CD8-positive, alpha-beta T cell (primary cell): ENCODE measurements at regions of chr3 and their contacts with region 1.

Region 1: DNA sequence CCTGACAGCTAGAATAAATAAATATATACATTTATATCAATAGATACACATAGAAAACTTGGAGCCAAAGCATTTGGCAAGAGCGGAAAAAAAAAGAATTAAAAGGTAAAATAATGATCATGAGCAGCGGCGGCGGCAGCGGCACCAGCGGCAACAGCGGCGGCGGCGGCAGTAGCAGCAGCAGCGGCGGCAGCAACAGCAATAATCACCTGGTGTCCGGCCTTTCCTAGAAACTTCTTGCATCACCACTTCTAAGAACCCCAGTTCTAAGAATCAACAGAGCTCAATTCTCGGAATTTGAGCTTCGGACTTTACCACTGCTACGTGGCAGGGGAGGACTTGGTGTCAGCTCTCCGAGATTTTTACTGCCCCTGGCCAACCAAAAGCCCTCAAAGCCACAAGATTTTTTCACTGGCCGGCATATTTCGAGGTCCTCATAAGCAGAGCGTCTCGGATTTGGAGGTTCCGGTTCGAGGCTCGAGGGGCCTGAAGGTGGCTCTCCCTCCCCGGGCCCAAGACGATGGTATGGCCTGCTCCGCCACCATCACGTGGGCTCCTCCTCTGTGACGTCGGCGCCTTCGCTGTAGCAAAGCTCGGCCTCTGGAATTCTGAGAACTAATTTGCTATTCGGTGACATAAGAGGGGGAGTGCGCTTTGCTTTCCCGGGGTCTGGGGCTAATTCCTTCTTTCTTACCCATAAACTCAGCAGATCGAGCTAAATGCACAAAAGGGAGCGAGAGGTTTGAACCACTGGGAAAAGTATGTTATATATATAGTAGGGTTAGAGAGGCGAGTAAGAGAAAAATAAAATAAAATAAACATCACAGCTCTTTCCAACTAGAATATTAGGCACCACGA is at the start of gene BCL6:
- DNase-seq: peak; percentile 71 to 97 (median 84)
- ATAC-seq: peak; percentile 64
- H3K4me3 ChIP-seq: peak within 1 kb of the TSS; percentile 88 to 89
- H3K4me3 Mint-ChIP-seq: peak within 1 kb of the TSS; percentile 94
- H3K27ac ChIP-seq: peak within 1 kb of the TSS; percentile 98 to 99
- H3K27ac Mint-ChIP-seq: peak within 1 kb of the TSS; percentile 100
- H3K4me1 ChIP-seq: peaks cover 38% of the 10 kb centered on the region
- H3K4me1 Mint-ChIP-seq: peaks cover 77% of the 10 kb centered on the region
- H3K27me3 ChIP-seq: no peaks in the 10 kb centered on the region
- H3K27me3 Mint-ChIP-seq: no peaks in the 10 kb centered on the region
- CTCF ChIP-seq: no peak
- total RNA-seq, gene BCL6: 89.2 to 93.1 TPM

Region 2: GRCh38 chr3:187777331-187777941 is 32.0 kb after region 1 on chr3:
- CTCF ChIA-PET with region 1: interaction called, 7 read pairs
- POLR2A ChIA-PET with region 1: no interaction called
- intact Hi-C with region 1: loop called in 1 of 2 experiments (anchors 1 kb)
- DNase-seq: peak in 8 of 9 experiments; percentile 10 to 84 (median 43)
- ATAC-seq: peak; percentile 88
- H3K4me3 ChIP-seq: no peak overlapping the region
- H3K4me3 Mint-ChIP-seq: peak overlapping the region; percentile 33
- H3K27ac ChIP-seq: peak overlapping the region in 1 of 2 experiments; percentile 64
- H3K27ac Mint-ChIP-seq: peak overlapping the region; percentile 88
- H3K4me1 ChIP-seq: peaks cover 16% of the 10 kb centered on the region
- H3K4me1 Mint-ChIP-seq: peaks cover 23% of the 10 kb centered on the region
- H3K27me3 ChIP-seq: no peaks in the 10 kb centered on the region
- H3K27me3 Mint-ChIP-seq: no peaks in the 10 kb centered on the region
- CTCF ChIP-seq: no peak

Region 3: GRCh38 chr3:187919048-187919447 is 173.6 kb after region 1 on chr3:
- CTCF ChIA-PET with region 1: interaction called, 4 read pairs
- POLR2A ChIA-PET with region 1: interaction called, 3 read pairs
- intact Hi-C with region 1: loop called (anchors 1 to 2 kb)
- DNase-seq: peak; percentile 10 to 84 (median 61)
- ATAC-seq: peak; percentile 85
- H3K4me3 ChIP-seq: peak overlapping the region; percentile 23 to 45
- H3K4me3 Mint-ChIP-seq: peak overlapping the region; percentile 80
- H3K27ac ChIP-seq: peak overlapping the region; percentile 28 to 77
- H3K27ac Mint-ChIP-seq: peak overlapping the region; percentile 89
- H3K4me1 ChIP-seq: peaks cover 21% of the 10 kb centered on the region
- H3K4me1 Mint-ChIP-seq: peaks cover 49% of the 10 kb centered on the region
- H3K27me3 ChIP-seq: no peaks in the 10 kb centered on the region
- H3K27me3 Mint-ChIP-seq: no peaks in the 10 kb centered on the region
- CTCF ChIP-seq: no peak

Region 4: GRCh38 chr3:188061133-188061532 is 315.7 kb after region 1 on chr3:
- CTCF ChIA-PET with region 1: interaction called, 8 read pairs
- POLR2A ChIA-PET with region 1: interaction called, 4 read pairs
- intact Hi-C with region 1: loop called (anchors 1 to 5 kb)
- DNase-seq: peak in 6 of 9 experiments; percentile 29 to 73 (median 50)
- ATAC-seq: peak; percentile 84
- H3K4me3 ChIP-seq: no peak overlapping the region
- H3K4me3 Mint-ChIP-seq: no peak overlapping the region
- H3K27ac ChIP-seq: peak overlapping the region in 1 of 2 experiments; percentile 21
- H3K27ac Mint-ChIP-seq: peak overlapping the region; percentile 57
- H3K4me1 ChIP-seq: peaks cover 4% of the 10 kb centered on the region
- H3K4me1 Mint-ChIP-seq: peaks cover 17% of the 10 kb centered on the region
- H3K27me3 ChIP-seq: no peaks in the 10 kb centered on the region
- H3K27me3 Mint-ChIP-seq: no peaks in the 10 kb centered on the region
- CTCF ChIP-seq: no peak

Region 5: GRCh38 chr3:188554404-188554803 is 809.0 kb after region 1 on chr3:
- CTCF ChIA-PET with region 1: interaction called, 7 read pairs
- POLR2A ChIA-PET with region 1: no interaction called
- intact Hi-C with region 1: loop called (anchors 10 kb)
- DNase-seq: no peak
- ATAC-seq: no peak
- H3K4me3 ChIP-seq: no peak overlapping the region
- H3K4me3 Mint-ChIP-seq: no peak overlapping the region
- H3K27ac ChIP-seq: peak overlapping the region in 1 of 2 experiments; percentile 38
- H3K27ac Mint-ChIP-seq: no peak overlapping the region
- H3K4me1 ChIP-seq: peaks cover 5% of the 10 kb centered on the region
- H3K4me1 Mint-ChIP-seq: peaks cover 23% of the 10 kb centered on the region
- H3K27me3 ChIP-seq: no peaks in the 10 kb centered on the region
- H3K27me3 Mint-ChIP-seq: no peaks in the 10 kb centered on the region
- CTCF ChIP-seq: no peak

Region 6: DNA sequence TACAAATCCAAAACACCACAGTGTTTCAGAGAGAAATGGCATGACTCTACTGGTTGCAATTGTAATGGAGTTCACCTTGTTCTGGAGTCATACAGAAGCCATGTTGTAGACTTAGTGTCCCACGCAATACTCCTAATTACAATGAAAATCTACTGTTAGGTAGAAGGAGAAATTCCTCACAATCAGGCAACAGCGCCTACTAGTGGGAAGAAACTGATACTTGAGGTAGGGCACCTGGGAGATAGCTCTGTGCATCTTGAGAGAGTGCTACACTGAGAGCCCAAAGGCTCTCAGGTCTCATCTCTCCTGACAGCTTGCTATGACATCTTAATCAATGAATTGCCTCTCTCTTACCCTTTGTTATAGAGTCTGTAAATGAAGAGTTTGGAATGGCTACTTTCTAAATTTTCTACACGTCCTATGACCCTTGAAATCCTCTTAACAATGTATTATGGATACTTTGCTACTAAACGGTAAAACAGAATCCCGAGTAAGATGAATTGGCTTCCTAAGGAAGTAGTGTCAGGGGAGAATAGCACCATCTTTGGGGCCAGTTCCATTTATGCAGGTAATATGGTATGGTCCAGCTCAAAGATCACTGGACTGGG is 1003.7 kb after region 1 on chr3:
- CTCF ChIA-PET with region 1: interaction called, 167 read pairs
- POLR2A ChIA-PET with region 1: interaction called, 8 read pairs
- intact Hi-C with region 1: loop called (anchors 1 kb)
- DNase-seq: peak; percentile 26 to 77 (median 59)
- ATAC-seq: peak; percentile 73
- H3K4me3 ChIP-seq: no peak overlapping the region
- H3K4me3 Mint-ChIP-seq: no peak overlapping the region
- H3K27ac ChIP-seq: no peak overlapping the region
- H3K27ac Mint-ChIP-seq: no peak overlapping the region
- H3K4me1 ChIP-seq: no peaks in the 10 kb centered on the region
- H3K4me1 Mint-ChIP-seq: peaks cover 2% of the 10 kb centered on the region
- H3K27me3 ChIP-seq: no peaks in the 10 kb centered on the region
- H3K27me3 Mint-ChIP-seq: no peaks in the 10 kb centered on the region
- CTCF ChIP-seq: peak; percentile 76

Region 7: DNA sequence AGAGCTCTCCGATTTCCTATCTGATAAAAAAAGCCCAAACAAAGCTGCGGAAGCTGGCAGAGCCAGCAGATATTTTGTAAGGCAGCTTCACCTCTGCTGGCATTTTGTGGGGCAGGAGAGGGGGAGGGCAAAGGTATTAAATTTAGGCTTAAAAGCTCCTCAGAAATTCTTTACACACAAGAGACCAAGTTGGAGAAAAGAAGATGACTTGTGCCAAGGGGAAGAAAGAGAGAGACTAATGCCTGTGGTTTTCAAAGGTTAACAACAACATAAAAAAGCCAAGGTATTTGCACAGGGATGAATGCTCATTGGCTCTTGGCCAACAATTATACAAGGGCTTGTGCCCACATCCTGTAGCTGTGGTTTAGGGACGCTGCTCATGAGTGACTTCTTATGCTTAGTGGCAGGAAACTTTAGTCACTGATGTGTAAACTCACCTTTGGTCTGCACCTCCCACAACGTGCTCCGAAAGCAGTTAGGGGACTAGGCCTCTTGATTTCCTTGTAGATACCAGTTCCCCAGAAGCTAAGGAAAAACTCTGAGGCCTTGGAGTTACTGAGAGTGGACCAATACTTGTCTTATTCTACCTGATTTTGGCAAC is 1579.2 kb after region 1 on chr3:
- CTCF ChIA-PET with region 1: no interaction called
- POLR2A ChIA-PET with region 1: no interaction called
- intact Hi-C with region 1: loop called (anchors 5 to 10 kb)
- DNase-seq: peak; percentile 44 to 97 (median 81)
- ATAC-seq: peak; percentile 96
- H3K4me3 ChIP-seq: peak overlapping the region in 1 of 2 experiments; percentile 6
- H3K4me3 Mint-ChIP-seq: peak overlapping the region; percentile 75
- H3K27ac ChIP-seq: peak overlapping the region in 1 of 2 experiments; percentile 55
- H3K27ac Mint-ChIP-seq: peak overlapping the region; percentile 95
- H3K4me1 ChIP-seq: peaks cover 44% of the 10 kb centered on the region
- H3K4me1 Mint-ChIP-seq: peaks cover 68% of the 10 kb centered on the region
- H3K27me3 ChIP-seq: no peaks in the 10 kb centered on the region
- H3K27me3 Mint-ChIP-seq: no peaks in the 10 kb centered on the region
- CTCF ChIP-seq: no peak